ENCODE measurements at regions of chr5 and their contacts with region 1.

Region 1: GRCh38 chr5:154174091-154174490 is 16.4 kb upstream of the GALNT10 start:
- DNase-seq: no peak
- ATAC-seq: no peak
- H3K4me3 ChIP-seq: no peak overlapping the region
- H3K27ac ChIP-seq: no peak overlapping the region
- H3K4me1 ChIP-seq: no peaks in the 10 kb centered on the region
- H3K27me3 ChIP-seq: no peaks in the 10 kb centered on the region

Region 2: DNA sequence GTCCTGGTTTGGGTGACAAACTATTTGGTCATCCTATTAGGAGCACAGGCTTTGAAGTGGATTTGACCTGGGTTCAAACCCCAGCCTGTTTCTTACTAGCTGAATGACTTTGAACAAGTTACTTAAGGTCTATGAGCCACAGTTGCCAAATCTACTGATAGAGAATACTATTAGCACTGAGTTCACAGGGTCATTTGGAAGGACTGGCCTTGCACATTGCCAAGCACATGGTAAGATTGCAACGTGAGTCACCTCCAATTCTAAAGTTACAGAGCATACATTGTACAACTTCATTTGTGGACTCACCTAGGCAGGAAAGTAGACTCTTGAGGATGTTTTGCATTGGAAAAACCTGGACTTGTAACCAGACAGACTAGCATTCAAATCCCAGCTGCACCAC is 96.4 kb before region 1 on chr5:
- intact Hi-C with region 1: loop called in 3 of 4 experiments (anchors 2 to 5 kb)
- DNase-seq: peak in 2 of 3 donors; percentile 26 to 51
- ATAC-seq: peak; percentile 79 to 83
- H3K4me3 ChIP-seq: no peak overlapping the region
- H3K27ac ChIP-seq: no peak overlapping the region
- H3K4me1 ChIP-seq: peaks cover 1% of the 10 kb centered on the region
- H3K27me3 ChIP-seq: no peaks in the 10 kb centered on the region